ENCODE measurements at regions of chr1 and their contacts with region 1.

Region 1: GRCh38 chr1:171485375-171486047 is at the start of gene PRRC2C:
- DNase-seq: peak; percentile 90
- ATAC-seq: peak; percentile 93
- H3K4me3 ChIP-seq: peak within 1 kb of the TSS; percentile 92
- H3K27ac ChIP-seq: peak within 1 kb of the TSS; percentile 98
- H3K4me1 ChIP-seq: no peaks in the 10 kb centered on the region; the same call in 1 of the 2 replicates
- H3K27me3 ChIP-seq: no peaks in the 10 kb centered on the region
- CTCF ChIP-seq: peak; percentile 73 to 98 (median 88)
- EP300 ChIP-seq: peak; percentile 22 to 26; a peak in 1 of 4 replicates
- POLR2A ChIP-seq: peak; percentile 82
- RAD21 ChIP-seq: peak; percentile 82
- polyA plus RNA-seq, gene PRRC2C: 53.4 to 74.2 TPM

Region 2: GRCh38 chr1:171472183-171472647 is 13.3 kb before region 1 on chr1:
- CTCF ChIA-PET with region 1: interaction called, 11 read pairs
- POLR2A ChIA-PET with region 1: interaction called, 5 read pairs
- RAD21 ChIA-PET with region 1: interaction called, 6 read pairs
- SMC1A ChIA-PET with region 1: interaction called, 3 read pairs
- in situ Hi-C with region 1: no loop called
- intact Hi-C with region 1: no loop called
- DNase-seq: peak; percentile 25
- ATAC-seq: peak; percentile 74
- H3K4me3 ChIP-seq: no peak overlapping the region
- H3K27ac ChIP-seq: no peak overlapping the region
- H3K4me1 ChIP-seq: no peaks in the 10 kb centered on the region
- H3K27me3 ChIP-seq: no peaks in the 10 kb centered on the region
- CTCF ChIP-seq: no peak
- EP300 ChIP-seq: no peak
- POLR2A ChIP-seq: no peak
- RAD21 ChIP-seq: no peak

Region 3: DNA sequence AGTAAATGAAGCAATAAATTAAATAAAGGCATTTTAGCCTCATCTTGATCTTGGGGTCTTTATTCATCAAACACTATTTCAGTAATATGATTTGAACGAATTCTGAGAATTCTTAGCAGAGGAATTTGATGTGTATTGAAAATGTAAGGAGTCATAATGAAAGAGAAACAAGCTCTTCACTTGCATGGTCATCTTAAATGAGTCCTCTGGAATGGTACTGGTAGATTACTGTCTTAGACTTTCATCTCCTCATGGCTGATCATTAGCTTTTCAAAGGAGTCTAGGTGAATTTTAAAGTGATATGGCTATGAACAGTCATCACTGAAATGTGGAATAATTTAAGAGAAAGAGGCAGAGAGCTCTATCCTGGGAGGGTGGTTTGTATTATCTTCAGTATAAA is 29.8 kb after region 1 on chr1:
- CTCF ChIA-PET with region 1: interaction called, 10 read pairs
- POLR2A ChIA-PET with region 1: no interaction called
- RAD21 ChIA-PET with region 1: interaction called, 9 read pairs
- SMC1A ChIA-PET with region 1: interaction called, 13 read pairs
- in situ Hi-C with region 1: no loop called
- intact Hi-C with region 1: no loop called
- DNase-seq: no peak
- ATAC-seq: peak; percentile 50
- H3K4me3 ChIP-seq: no peak overlapping the region
- H3K27ac ChIP-seq: no peak overlapping the region
- H3K4me1 ChIP-seq: no peaks in the 10 kb centered on the region
- H3K27me3 ChIP-seq: no peaks in the 10 kb centered on the region
- CTCF ChIP-seq: no peak
- EP300 ChIP-seq: no peak
- POLR2A ChIP-seq: no peak
- RAD21 ChIP-seq: no peak

Region 4: DNA sequence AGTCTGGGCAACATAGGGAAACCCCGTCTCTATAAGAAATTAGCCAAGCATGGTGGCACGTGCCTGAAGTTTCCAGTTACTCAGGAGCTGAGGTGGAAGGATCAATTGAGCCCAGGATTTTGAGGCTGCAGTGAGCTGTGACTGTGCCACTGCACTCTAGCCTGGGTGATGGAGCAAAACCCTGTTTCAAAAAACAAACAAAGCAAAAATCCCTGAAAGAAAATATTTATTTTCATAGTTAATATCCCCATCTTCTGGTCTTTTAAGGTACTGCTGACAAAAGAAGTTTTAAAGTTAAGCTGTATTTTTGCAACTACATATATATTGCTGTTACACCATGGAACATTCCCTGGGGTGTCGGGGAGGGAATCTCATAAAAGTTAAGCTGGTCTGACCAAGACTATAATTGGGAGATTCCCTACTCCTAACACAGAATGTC is 230.3 kb after region 1 on chr1:
- CTCF ChIA-PET with region 1: interaction called, 23 read pairs
- POLR2A ChIA-PET with region 1: interaction called, 3 read pairs
- RAD21 ChIA-PET with region 1: interaction called, 13 read pairs
- SMC1A ChIA-PET with region 1: interaction called, 4 read pairs
- in situ Hi-C with region 1: no loop called
- intact Hi-C with region 1: loop called (anchors 10 kb)
- DNase-seq: no peak
- ATAC-seq: peak; percentile 63
- H3K4me3 ChIP-seq: no peak overlapping the region
- H3K27ac ChIP-seq: no peak overlapping the region
- H3K4me1 ChIP-seq: no peaks in the 10 kb centered on the region
- H3K27me3 ChIP-seq: no peaks in the 10 kb centered on the region
- CTCF ChIP-seq: peak; percentile 21 to 43 (median 27); a peak in 2 of 6 replicates
- EP300 ChIP-seq: no peak
- POLR2A ChIP-seq: no peak
- RAD21 ChIP-seq: no peak

Region 5: DNA sequence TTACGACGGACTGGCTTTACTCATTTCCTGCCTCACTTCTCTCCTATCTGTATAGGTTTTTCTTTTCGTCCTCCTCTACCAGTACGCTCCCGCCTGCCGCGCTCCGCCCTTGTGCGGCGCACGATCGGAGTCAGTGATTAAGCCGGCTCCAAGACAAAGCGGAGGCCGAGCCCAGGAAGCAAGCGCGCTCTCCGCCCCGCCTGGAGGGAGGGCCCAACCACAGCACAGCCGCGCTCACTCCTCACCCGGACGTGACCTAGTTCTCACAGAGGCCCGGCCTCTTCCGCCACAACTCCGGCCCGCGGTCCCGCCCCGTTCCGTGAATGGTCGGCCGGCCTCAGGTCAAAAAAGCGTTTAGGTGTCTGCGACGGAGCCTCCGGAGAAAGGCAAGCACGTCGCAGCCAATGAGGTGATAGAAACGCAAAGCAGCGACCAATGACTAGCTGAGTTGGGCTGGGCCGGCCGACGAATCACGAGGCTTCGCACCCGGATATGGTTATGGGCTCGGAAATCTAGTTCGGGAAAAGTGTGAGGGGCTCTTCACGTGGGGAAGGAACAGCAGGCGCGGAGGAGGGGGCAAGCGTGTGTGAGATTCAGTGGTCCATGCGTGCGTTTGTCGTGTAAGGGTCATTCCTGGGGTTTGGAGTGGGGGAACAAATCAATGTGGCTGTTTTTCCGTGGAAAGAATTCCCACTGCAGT is 295.8 kb after region 1 on chr1 and contains the start of gene METTL13:
- CTCF ChIA-PET with region 1: interaction called, 5 read pairs
- POLR2A ChIA-PET with region 1: interaction called, 3 read pairs
- RAD21 ChIA-PET with region 1: interaction called, 3 read pairs
- SMC1A ChIA-PET with region 1: interaction called, 6 read pairs
- in situ Hi-C with region 1: no loop called
- intact Hi-C with region 1: loop called (anchors 2 kb)
- DNase-seq: peak; percentile 96
- ATAC-seq: peak; percentile 99
- H3K4me3 ChIP-seq: peak within 1 kb of the TSS; percentile 93
- H3K27ac ChIP-seq: peak within 1 kb of the TSS; percentile 82
- H3K4me1 ChIP-seq: peaks cover 10% of the 10 kb centered on the region; the same call in 1 of the 2 replicates
- H3K27me3 ChIP-seq: no peaks in the 10 kb centered on the region
- CTCF ChIP-seq: no peak
- EP300 ChIP-seq: no peak
- POLR2A ChIP-seq: peak; percentile 96
- RAD21 ChIP-seq: no peak
- polyA plus RNA-seq, gene METTL13: 12.2 to 16.8 TPM

Region 6: GRCh38 chr1:172532700-172533509 is 1047.4 kb after region 1 on chr1 and contains the start of gene SUCO:
- CTCF ChIA-PET with region 1: no interaction called
- POLR2A ChIA-PET with region 1: no interaction called
- RAD21 ChIA-PET with region 1: no interaction called
- SMC1A ChIA-PET with region 1: no interaction called
- in situ Hi-C with region 1: no loop called
- intact Hi-C with region 1: loop called (anchors 5 kb)
- DNase-seq: peak; percentile 96
- ATAC-seq: peak; percentile 89
- H3K4me3 ChIP-seq: peak within 1 kb of the TSS; percentile 93
- H3K27ac ChIP-seq: peak within 1 kb of the TSS; percentile 95
- H3K4me1 ChIP-seq: peaks cover 5% of the 10 kb centered on the region; the same call in 1 of the 2 replicates
- H3K27me3 ChIP-seq: no peaks in the 10 kb centered on the region
- CTCF ChIP-seq: no peak
- EP300 ChIP-seq: no peak; a peak in 1 of 4 replicates
- POLR2A ChIP-seq: peak; percentile 97
- RAD21 ChIP-seq: no peak
- polyA plus RNA-seq, gene SUCO: 1.7 to 2.6 TPM